ENCODE measurements at regions of chr10 and their contacts with region 1.

Region 1: GRCh38 chr10:110501142-110501937 is 3.6 kb downstream of the DUSP5 start:
- DNase-seq: peak; percentile 85
- H3K4me3 ChIP-seq: peak overlapping the region; percentile 22 to 75 (median 66)
- H3K27ac ChIP-seq: peak overlapping the region; percentile 24 to 95 (median 89)
- H3K4me1 ChIP-seq: peaks cover 61 to 94% (median 89%) of the 10 kb centered on the region in 6 donors
- H3K27me3 ChIP-seq: peaks cover 0 to 24% (median 0%) of the 10 kb centered on the region in 7 donors
- CTCF ChIP-seq: no peak
- POLR2A ChIP-seq: no peak

Region 2: DNA sequence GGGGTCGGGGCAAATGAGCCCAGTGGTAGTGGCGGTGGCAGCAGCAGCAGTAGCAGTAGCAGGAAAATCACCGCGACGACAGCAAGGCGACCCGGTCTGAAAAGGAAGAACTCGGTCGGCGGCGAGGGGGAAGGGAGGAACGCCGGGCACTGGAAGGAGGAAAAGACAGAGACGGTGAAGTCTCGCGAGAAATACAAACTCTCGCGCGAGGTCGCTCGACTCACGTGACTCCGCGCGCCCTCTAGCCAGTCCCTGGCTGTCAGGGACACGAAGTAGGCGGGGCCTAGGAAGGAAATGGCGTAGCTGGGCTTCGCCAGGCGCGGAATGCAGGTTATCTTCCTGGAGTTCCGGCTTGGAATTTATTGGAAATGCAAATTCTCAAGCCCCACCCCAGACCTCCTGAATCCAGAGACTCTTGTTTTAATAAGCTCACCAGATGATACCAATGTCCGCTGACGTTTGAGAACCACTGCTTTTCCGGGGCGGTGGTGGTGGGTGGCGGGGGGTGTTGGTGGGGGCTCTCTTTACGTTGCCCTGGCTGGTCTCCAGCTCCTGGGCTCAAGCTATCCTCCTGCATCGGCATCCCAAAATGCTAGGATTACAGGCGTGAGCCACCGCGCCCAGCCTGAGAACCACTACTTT is 196.4 kb before region 1 on chr10 and contains the start of gene SMNDC1:
- intact Hi-C with region 1: loop called (anchors 5 kb)
- DNase-seq: peak; percentile 98
- H3K4me3 ChIP-seq: peak within 1 kb of the TSS; percentile 72 to 92 (median 82)
- H3K27ac ChIP-seq: peak within 1 kb of the TSS; percentile 87 to 97 (median 94)
- H3K4me1 ChIP-seq: peaks cover 40 to 81% (median 65%) of the 10 kb centered on the region in 6 donors
- H3K27me3 ChIP-seq: no peaks in the 10 kb centered on the region
- CTCF ChIP-seq: peak in 4 of 11 experiments; percentile 19 to 53 (median 36)
- POLR2A ChIP-seq: peak in 2 of 3 donors; percentile 41 to 81
- total RNA-seq, gene SMNDC1: 16.1 to 34.8 (median 27.3) TPM